Cardiac septum (tissue), 1 donor: ENCODE measurements at regions of chr17 and their contacts with region 1.

Region 1: DNA sequence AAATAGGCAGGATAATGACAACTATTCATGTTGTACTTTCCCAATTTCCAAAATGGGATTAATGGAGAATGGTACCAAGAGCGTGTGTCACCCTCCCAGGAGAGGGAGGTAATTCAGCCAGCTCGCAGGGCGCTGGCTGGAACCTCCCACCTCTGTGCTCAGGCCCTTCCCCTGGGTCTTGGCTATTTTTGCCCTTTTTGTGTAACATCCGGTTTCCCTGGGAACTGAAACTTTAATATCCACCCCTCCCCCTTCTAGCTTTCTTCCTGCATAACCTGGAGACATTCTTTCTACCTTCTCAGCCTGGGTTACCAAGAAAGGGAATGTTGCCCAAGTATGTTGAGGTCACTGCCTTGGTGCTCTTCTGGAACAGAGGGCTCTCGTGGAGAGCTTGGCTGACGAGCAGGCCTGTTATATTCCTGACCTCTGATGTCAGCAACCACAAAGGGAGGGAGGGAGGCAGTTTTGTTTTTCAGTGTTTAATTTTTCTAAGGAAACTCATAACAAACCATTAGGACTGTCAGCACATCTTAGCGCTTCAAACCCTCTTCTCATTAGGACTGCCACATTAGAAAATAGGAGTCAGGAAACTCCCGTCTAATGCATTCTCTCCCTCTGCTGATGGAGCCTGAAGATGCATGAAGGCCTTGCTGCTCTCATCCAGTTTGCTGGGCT is 25.6 kb downstream of the ITGB3 start:
- DNase-seq: no peak

Region 2: DNA sequence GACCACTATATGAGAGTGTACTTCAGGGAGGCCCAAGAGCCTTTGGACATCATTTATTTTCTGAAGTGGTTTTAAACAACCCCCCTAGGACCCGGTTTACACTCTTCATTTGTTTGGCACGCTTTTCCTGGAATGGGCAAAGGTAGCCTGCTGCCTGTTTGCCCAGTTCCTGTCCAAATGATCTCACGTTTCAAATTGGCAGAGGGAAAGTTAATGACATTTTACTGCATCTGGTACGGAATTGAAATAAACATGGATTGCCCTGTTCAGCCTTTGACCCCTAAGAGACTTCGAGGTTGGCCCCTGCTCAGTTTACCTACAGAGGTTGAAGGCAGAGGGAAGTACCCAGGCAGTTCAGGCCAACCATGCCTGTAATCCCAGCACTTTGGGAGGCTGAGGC is 294.3 kb before region 1 on chr17:
- intact Hi-C with region 1: no loop called
- DNase-seq: no peak

Region 3: GRCh38 chr17:47239619-47240374 is 39.4 kb before region 1 on chr17:
- intact Hi-C with region 1: loop called (anchors 2 kb)
- DNase-seq: peak; percentile 89

Region 4: GRCh38 chr17:47323382-47324222 is 44.4 kb after region 1 on chr17 and contains the start of gene EFCAB13:
- intact Hi-C with region 1: loop called (anchors 5 kb)
- DNase-seq: peak; percentile 93
- total RNA-seq, gene EFCAB13: 3.0 TPM

Region 5: GRCh38 chr17:47335101-47335936 is 56.1 kb after region 1 on chr17:
- intact Hi-C with region 1: no loop called
- DNase-seq: no peak

Region 6: GRCh38 chr17:47376249-47376648 is 97.0 kb after region 1 on chr17:
- intact Hi-C with region 1: no loop called
- DNase-seq: no peak